Gastrocnemius medialis (tissue), 4 donors: ENCODE measurements at regions of chr7 and their contacts with region 1.

Region 1: GRCh38 chr7:99918959-99919813 is at the start of gene TRIM4:
- DNase-seq: peak; percentile 89 to 91
- ATAC-seq: peak; percentile 96
- H3K4me3 ChIP-seq: peak within 1 kb of the TSS; percentile 63 to 95 (median 86)
- H3K27ac ChIP-seq: peak within 1 kb of the TSS; percentile 85 to 95 (median 93)
- H3K4me1 ChIP-seq: peaks cover 34 to 39% of the 10 kb centered on the region in 2 donors
- H3K27me3 ChIP-seq: no peaks in the 10 kb centered on the region
- CTCF ChIP-seq: peak; percentile 23 to 52 (median 34)
- POLR2A ChIP-seq: peak; percentile 82 to 85
- total RNA-seq, gene TRIM4: 6.4 to 10.5 (median 7.7) TPM

Region 2: GRCh38 chr7:99616359-99617191 is 302.6 kb before region 1 on chr7 and contains the start of gene ZSCAN25:
- in situ Hi-C with region 1: no loop called
- intact Hi-C with region 1: loop called (anchors 1 kb)
- DNase-seq: peak; percentile 78 to 85
- ATAC-seq: peak; percentile 98
- H3K4me3 ChIP-seq: peak within 1 kb of the TSS; percentile 97 to 99 (median 98)
- H3K27ac ChIP-seq: peak within 1 kb of the TSS; percentile 87 to 93 (median 91)
- H3K4me1 ChIP-seq: peaks cover 12 to 16% of the 10 kb centered on the region in 2 donors
- H3K27me3 ChIP-seq: no peaks in the 10 kb centered on the region
- CTCF ChIP-seq: peak in 2 of 5 experiments; percentile 18 to 50
- POLR2A ChIP-seq: peak; percentile 36 to 66
- total RNA-seq, gene ZSCAN25: 6.0 to 7.9 (median 7.2) TPM

Region 3: DNA sequence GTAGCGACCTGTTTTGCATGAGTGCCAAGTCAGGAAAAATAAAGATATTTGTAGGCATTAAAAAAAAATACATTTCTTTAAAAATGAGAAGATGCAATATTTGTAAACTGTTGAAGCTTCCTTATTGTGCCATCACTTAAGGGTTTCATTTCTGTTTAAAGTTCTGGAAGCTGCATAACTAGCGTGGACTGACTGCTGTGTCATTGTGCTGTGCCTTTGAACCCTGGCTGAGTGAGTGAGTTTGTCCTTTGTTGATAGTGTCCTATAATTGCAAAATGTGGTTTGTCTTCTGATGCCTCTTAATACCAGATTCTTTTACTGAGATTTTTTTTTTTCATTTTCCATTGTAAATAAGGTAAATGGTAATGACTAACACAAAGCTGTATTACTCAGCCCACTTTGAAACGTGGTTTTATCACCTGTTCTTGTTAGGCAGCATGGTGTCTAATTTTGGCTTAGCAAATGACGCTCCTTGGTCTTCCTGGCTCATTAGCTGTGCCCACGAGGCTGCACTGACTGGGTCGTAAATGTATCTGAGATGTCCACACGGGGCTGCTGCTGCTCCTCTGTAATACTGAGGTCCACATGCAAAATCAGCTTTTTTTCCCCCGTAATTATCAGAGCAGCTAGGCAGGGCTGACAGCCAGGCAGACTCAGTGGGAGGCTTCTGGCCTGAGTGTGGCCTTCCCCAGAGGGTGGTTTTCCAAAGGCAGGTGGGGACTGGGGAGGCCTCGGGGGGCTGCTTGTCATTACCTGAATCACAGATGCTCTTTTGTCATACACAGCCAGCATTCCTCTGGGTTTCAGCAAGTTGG is 287.7 kb before region 1 on chr7:
- in situ Hi-C with region 1: no loop called
- intact Hi-C with region 1: loop called (anchors 1 kb)
- DNase-seq: peak; percentile 48 to 78
- ATAC-seq: peak; percentile 96 to 98
- H3K4me3 ChIP-seq: no peak overlapping the region
- H3K27ac ChIP-seq: peak overlapping the region; percentile 67 to 82 (median 71)
- H3K4me1 ChIP-seq: peaks cover 10 to 17% of the 10 kb centered on the region in 2 donors
- H3K27me3 ChIP-seq: no peaks in the 10 kb centered on the region
- CTCF ChIP-seq: peak; percentile 40 to 61 (median 52)
- POLR2A ChIP-seq: no peak

Region 4: DNA sequence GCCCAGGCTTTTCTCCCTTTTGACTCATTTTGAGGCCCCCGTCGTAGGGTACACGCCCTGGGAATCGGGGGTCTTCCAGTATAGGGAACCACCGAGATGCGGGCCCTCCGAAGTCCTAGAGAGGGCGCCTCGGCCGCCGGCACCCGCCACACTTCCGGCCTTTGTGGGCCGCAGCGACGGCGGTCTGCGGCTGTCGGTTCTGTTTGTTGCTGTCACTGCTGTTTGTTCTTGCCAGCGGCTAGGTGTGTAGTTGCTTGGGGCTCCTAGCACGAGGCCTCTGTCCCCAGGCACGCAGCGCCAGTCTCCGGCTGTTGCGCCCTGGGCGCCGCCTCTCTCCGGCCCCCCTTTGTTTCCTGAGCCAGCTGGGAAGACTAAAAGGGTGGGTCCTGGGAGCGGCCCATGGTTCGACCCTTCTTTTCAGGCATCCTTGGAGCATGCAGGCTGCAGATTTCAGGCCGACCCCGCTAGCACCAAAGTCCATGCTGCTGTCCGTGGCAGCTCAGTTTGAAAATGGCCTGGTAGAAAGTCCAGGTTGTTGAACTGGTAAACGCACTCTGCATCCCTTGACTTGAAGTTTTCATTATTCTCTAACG is 78.5 kb after region 1 on chr7:
- in situ Hi-C with region 1: loop called in 2 of 4 experiments (anchors 10 kb)
- intact Hi-C with region 1: no loop called
- DNase-seq: peak in 1 of 2 donors; percentile 25
- ATAC-seq: peak in 1 of 2 donors; percentile 36
- H3K4me3 ChIP-seq: peak overlapping the region; percentile 58 to 68 (median 63)
- H3K27ac ChIP-seq: peak overlapping the region; percentile 44 to 73 (median 66)
- H3K4me1 ChIP-seq: peaks cover 4 to 8% of the 10 kb centered on the region in 2 donors
- H3K27me3 ChIP-seq: peaks cover 0 to 6% (median 0%) of the 10 kb centered on the region in 3 donors
- CTCF ChIP-seq: peak in 2 of 5 experiments; percentile 24 to 34
- POLR2A ChIP-seq: no peak